Vagina (tissue), 2 donors: ENCODE measurements at regions of chr3 and their contacts with region 1.

Region 1: DNA sequence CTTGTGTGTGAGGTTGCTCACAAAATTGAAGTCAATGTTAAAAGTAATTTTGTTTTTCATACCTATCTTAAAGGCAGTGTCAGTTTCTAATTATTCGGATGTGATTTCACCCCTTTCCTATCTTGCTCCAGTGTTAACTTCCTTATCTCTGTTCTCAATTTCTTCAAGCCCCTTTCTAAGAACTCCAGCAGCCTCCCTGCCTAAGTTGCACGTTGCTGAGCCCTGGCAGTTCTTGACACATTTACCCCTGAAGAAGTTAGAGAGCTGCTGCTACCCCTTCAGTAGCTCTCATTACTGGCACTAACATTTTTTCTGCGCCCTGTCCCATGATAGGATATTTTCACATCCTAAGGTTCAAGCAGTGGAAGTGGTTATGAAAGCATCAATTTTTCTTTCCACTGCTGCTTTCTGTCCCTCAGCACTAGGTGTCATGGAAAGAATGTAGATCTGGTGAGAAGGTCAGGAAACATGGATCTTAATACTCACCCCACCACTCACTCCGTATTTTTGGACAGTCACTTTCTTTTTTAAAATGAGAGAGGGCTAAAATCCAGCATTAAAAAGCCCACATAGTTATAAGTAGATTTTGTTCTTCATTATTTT is 62.9 kb downstream of the OPA1 start:
- DNase-seq: no peak
- H3K4me3 ChIP-seq: no peak overlapping the region
- H3K27ac ChIP-seq: no peak overlapping the region
- H3K4me1 ChIP-seq: no peaks in the 10 kb centered on the region
- H3K27me3 ChIP-seq: no peaks in the 10 kb centered on the region
- CTCF ChIP-seq: no peak
- POLR2A ChIP-seq: no peak

Region 2: GRCh38 chr3:192929755-192930547 is 726.0 kb before region 1 on chr3:
- intact Hi-C with region 1: no loop called
- DNase-seq: no peak
- H3K4me3 ChIP-seq: no peak overlapping the region
- H3K27ac ChIP-seq: no peak overlapping the region
- H3K4me1 ChIP-seq: no peaks in the 10 kb centered on the region
- H3K27me3 ChIP-seq: no peaks in the 10 kb centered on the region
- CTCF ChIP-seq: no peak
- POLR2A ChIP-seq: no peak

Region 3: DNA sequence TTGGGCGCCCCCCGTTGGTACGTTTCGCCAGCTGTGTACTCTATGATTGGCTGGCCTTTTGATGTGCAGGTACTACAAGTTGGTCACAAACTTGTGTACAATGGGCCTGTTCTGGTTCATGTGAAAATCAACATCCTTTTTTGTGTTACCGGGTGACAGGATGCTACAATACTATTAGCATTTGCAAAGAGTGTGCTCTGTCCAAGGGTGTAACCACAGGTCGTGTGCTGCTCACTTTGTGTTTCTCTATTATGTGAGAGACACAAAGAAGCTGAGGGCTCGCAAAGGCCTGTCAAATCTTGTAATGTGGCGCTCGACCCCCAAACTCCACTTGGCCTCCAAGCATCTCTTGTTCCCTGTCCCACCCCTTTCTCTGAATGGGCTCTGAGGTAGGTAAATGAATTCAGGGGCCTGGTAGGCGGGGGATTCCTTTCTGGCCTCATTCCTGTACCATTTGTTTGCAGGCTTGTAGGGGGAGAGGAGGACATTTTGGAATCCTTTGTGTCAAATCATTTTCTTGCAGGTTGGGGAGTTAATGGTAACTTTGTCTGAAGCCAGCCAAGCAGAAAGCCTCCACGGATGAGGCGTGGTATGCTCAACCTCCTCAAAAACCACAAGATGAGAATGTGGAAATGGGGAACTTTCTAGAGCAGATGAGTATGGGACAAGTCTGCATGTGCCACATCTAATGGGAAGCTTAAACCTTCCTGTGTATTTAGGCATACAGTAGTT is 46.1 kb after region 1 on chr3:
- intact Hi-C with region 1: loop called (anchors 1 kb)
- DNase-seq: no peak
- H3K4me3 ChIP-seq: no peak overlapping the region
- H3K27ac ChIP-seq: no peak overlapping the region
- H3K4me1 ChIP-seq: peaks cover 6% of the 10 kb centered on the region
- H3K27me3 ChIP-seq: no peaks in the 10 kb centered on the region
- CTCF ChIP-seq: no peak
- POLR2A ChIP-seq: no peak

Region 4: DNA sequence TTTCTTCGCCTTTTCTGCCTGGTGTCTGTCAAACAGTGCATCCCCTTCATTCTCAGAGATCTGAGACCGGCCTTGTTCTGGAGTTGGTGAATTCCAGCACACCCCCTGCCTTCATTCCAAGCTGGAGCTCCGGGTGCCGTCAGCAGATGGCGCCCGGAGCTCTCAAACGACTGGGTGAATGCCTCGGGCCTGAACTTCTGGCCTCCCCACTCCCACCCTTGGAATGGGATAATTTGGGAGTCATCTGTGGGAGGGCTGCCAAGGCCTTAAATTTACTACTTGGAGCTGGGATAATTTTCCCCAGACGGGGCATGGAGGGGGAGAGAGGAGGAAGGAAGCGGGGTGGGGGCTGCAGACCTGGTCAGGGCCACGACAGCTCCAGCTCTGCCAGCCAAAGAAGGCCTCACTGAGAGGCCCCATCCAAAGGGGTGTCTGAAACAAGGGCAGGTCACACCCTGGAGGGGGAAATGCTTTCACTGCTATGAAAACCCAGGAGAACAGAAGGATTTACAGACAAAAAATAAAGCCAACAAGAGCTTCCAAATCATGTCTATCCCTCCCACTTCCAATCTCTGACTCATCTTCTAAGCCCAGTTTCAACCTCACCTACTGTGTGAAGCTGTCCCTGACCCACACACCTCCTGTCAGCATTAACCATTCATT is 125.0 kb after region 1 on chr3:
- intact Hi-C with region 1: no loop called
- DNase-seq: peak in 1 of 2 donors; percentile 92
- H3K4me3 ChIP-seq: no peak overlapping the region
- H3K27ac ChIP-seq: peak overlapping the region; percentile 43
- H3K4me1 ChIP-seq: peaks cover 31% of the 10 kb centered on the region
- H3K27me3 ChIP-seq: no peaks in the 10 kb centered on the region
- CTCF ChIP-seq: peak; percentile 42 to 87 (median 82)
- POLR2A ChIP-seq: no peak